Left ventricle myocardium inferior (tissue), 1 donor: ENCODE measurements at regions of chr2 and their contacts with region 1.

Region 1: GRCh38 chr2:189412330-189412953 is 28.8 kb upstream of the WDR75 start:
- DNase-seq: no peak
- H3K4me3 ChIP-seq: no peak overlapping the region
- H3K27ac ChIP-seq: peak overlapping the region; percentile 55
- H3K4me1 ChIP-seq: no peaks in the 10 kb centered on the region
- H3K27me3 ChIP-seq: no peaks in the 10 kb centered on the region
- CTCF ChIP-seq: peak; percentile 83

Region 2: GRCh38 chr2:188524519-188525113 is 887.8 kb before region 1 on chr2:
- intact Hi-C with region 1: loop called (anchors 5 kb)
- DNase-seq: no peak
- H3K4me3 ChIP-seq: no peak overlapping the region
- H3K27ac ChIP-seq: no peak overlapping the region
- H3K4me1 ChIP-seq: peaks cover 8% of the 10 kb centered on the region
- H3K27me3 ChIP-seq: no peaks in the 10 kb centered on the region
- CTCF ChIP-seq: peak; percentile 86

Region 3: GRCh38 chr2:189092936-189093335 is 319.5 kb before region 1 on chr2:
- intact Hi-C with region 1: loop called (anchors 5 kb)
- DNase-seq: peak; percentile 25
- H3K4me3 ChIP-seq: no peak overlapping the region
- H3K27ac ChIP-seq: peak overlapping the region; percentile 66
- H3K4me1 ChIP-seq: peaks cover 37% of the 10 kb centered on the region
- H3K27me3 ChIP-seq: no peaks in the 10 kb centered on the region
- CTCF ChIP-seq: no peak

Region 4: GRCh38 chr2:189210250-189211075 is 202.0 kb before region 1 on chr2:
- intact Hi-C with region 1: no loop called
- DNase-seq: peak; percentile 22
- H3K4me3 ChIP-seq: peak overlapping the region; percentile 31
- H3K27ac ChIP-seq: peak overlapping the region; percentile 79
- H3K4me1 ChIP-seq: peaks cover 4% of the 10 kb centered on the region
- H3K27me3 ChIP-seq: no peaks in the 10 kb centered on the region
- CTCF ChIP-seq: no peak